ENCODE measurements at regions of chr6 and their contacts with region 1.

Region 1: DNA sequence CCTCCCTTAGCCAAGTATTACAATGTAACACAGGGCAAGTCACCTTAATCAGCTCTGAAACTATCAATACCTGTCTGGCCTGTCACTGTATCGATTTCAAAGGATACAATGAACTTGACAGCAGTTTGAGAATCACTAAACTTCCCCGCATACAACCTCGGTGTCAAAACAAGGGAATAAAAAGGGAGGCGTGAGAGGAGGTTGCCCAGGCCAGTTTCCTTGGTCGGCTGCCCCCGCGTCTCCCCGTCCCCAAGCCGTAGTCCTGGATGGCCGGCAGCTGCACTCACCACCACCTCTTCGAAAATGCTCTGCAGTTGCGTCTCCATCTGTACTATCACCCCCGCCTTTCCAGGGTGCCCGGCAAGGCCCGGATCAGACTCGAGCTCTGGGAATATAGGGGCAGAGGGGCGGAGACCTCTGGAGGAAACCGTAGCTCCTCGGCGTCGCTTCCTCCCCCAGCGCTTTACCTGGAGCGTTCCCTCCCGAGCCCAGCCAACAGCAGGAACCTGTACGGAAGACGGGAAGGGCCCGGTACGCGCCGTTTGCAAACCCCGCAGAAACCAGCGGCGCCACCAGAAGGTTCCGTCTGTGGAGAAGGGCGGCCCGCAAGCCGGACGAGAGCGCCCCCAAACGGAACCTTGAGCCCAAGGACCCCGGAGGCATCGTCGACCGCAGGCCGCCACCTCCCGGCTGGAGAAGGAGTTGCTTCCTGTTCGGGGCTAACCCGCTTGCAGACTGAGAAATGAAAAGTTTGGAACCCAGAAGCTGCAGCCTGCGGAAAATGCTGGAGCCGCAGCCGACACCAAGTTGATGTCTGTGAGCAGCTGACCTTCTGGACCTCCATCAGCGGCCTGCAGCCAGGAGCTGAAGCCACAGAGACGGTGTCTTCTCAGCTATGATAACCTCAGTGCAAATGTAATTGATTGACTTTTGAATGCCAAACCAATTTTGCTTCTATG is at the start of gene MED23:
- DNase-seq: peak; percentile 92
- H3K4me3 Mint-ChIP-seq: peak within 1 kb of the TSS; percentile 97
- H3K27ac Mint-ChIP-seq: peak within 1 kb of the TSS; percentile 90
- H3K4me1 Mint-ChIP-seq: peaks cover 21% of the 10 kb centered on the region
- H3K27me3 Mint-ChIP-seq: no peaks in the 10 kb centered on the region
- total RNA-seq, gene MED23: 40.4 and 43.6 TPM in 2 replicates

Region 2: DNA sequence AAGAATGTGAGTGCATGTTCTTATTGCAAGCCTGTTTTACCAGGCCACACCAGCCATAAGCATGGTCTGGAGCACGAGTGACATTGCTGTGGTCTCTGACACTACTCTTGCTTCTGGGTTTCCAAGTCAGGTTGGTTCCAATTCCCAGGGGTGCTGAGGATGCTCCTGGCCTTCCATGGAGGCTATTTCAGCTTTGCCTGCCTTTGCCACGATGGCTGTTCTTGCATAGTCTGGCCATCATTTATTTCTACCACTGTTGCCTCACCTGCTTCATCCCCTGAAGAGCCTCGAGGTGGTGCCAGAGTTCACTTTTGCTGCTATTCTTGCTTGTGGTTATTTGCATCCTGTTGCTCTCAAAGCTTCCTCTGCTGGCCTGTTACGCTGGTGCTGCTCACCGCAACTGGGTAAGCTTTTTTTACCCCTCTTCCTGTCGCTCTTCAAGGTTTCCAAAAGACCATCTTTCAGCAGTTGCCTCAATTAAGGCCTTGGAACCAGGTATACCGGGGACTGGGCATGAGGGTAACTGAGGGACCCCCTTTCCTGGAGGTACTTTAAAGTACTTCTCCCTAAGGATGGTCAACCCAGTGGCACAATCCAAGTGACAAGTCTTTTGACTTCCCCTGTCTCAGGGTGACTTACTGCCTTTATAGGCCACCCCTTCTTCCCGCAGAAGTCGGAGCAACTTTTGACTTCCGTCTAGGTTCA is 428.3 kb before region 1 on chr6:
- intact Hi-C with region 1: loop called (anchors 2 kb)
- DNase-seq: peak; percentile 76
- H3K4me3 Mint-ChIP-seq: peak overlapping the region; percentile 65
- H3K27ac Mint-ChIP-seq: peak overlapping the region; percentile 93
- H3K4me1 Mint-ChIP-seq: peaks cover 40% of the 10 kb centered on the region
- H3K27me3 Mint-ChIP-seq: no peaks in the 10 kb centered on the region

Region 3: GRCh38 chr6:131613296-131613925 is 14.6 kb before region 1 on chr6:
- intact Hi-C with region 1: loop called (anchors 1 kb)
- DNase-seq: no peak
- H3K4me3 Mint-ChIP-seq: no peak overlapping the region
- H3K27ac Mint-ChIP-seq: no peak overlapping the region
- H3K4me1 Mint-ChIP-seq: peaks cover 14% of the 10 kb centered on the region
- H3K27me3 Mint-ChIP-seq: no peaks in the 10 kb centered on the region

Region 4: DNA sequence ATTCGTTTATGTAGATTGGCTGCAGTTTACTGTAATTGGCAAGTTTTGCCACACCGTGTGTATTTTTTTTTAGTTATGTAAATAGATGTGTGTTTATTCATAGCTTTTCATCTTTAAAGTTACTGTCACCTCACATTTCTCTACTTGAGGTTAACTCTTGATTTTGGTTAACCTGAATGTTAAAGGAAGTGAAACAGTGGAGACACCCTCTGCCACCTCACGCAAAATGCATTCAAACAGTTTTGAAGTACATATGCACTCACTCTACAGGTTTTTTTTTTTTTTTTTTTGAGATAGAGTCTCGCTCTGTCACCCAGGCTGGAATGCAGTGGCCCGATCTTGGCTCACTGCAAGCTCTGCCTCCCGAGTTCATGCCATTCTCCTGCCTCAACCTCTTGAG is 55.5 kb after region 1 on chr6:
- intact Hi-C with region 1: loop called (anchors 1 kb)
- DNase-seq: peak; percentile 22
- H3K4me3 Mint-ChIP-seq: no peak overlapping the region
- H3K27ac Mint-ChIP-seq: peak overlapping the region; percentile 65
- H3K4me1 Mint-ChIP-seq: peaks cover 50% of the 10 kb centered on the region
- H3K27me3 Mint-ChIP-seq: no peaks in the 10 kb centered on the region

Region 5: DNA sequence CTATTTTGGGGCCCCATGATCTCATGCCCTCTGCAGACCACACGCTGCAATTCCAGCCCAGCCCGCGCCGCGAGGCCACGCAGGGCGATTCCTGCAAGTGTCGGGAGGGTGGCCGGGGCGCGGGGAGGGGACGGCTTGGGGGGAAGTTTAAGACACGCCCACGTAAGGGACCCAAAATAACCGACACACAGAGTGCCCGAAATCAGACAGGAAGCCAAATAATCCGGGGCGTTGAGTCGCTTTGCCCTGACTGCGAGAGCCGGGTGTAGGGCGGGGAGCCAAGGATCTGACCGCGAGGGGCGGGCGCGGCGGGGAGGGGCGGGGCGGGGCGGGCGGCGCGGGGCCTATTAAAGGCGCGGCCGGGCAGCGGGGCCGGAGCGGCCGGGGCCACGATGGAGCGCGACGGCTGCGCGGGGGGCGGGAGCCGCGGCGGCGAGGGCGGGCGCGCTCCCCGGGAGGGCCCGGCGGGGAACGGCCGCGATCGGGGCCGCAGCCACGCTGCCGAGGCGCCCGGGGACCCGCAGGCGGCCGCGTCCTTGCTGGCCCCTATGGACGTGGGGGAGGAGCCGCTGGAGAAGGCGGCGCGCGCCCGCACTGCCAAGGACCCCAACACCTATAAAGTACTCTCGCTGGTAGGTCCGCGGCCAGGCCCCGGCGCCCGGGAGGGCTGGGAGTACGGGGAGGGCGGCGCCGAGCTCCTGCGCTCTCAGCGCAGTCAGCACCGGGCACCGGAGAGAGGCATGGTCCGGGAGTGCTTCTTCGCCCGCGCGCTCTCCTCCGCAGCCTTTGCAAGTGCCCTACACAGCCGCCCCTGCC is 179.8 kb after region 1 on chr6 and contains the start of gene ENPP1:
- intact Hi-C with region 1: loop called (anchors 5 kb)
- DNase-seq: peak; percentile 52
- H3K4me3 Mint-ChIP-seq: peak within 1 kb of the TSS; percentile 90
- H3K27ac Mint-ChIP-seq: peak within 1 kb of the TSS; percentile 85
- H3K4me1 Mint-ChIP-seq: peaks cover 37% of the 10 kb centered on the region
- H3K27me3 Mint-ChIP-seq: peaks cover 40% of the 10 kb centered on the region
- total RNA-seq, gene ENPP1: 34.8 TPM in 2 replicates

Region 6: GRCh38 chr6:132131758-132132157 is 503.8 kb after region 1 on chr6:
- intact Hi-C with region 1: no loop called
- DNase-seq: no peak
- H3K4me3 Mint-ChIP-seq: no peak overlapping the region
- H3K27ac Mint-ChIP-seq: no peak overlapping the region
- H3K4me1 Mint-ChIP-seq: peaks cover 8% of the 10 kb centered on the region
- H3K27me3 Mint-ChIP-seq: peaks cover 6% of the 10 kb centered on the region

Region 7: DNA sequence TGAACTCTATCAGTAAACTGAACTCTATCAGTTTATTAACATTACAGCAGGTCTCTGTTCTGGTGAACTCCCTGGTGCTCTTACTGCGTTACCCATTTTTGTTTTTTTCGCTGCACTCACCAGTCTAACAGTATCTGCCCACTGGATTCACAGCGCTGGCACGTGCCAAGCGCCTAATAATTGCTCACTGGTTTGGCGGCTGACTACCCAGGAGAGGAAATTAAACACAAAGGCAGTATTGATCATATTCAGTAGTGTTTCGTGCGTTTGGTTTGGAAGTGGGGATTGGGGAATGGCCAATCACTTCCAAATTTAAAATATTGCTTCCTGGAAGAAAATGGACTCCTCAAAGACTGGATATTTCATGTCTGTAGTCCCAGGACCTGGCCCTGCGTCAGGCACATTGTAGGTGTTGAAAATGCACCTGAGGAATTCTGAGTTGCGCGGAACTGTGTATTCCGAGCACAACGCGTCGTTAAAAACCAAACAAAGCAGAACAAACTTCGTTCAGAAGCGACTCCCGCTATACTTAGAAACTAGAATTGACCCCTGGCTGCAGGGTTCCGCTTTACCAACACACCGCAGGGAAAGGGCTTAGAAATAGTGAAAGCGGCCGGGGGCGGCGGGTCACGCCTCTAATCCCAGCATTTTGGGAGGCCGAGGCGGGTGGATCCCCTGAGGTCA is 1185.3 kb after region 1 on chr6:
- intact Hi-C with region 1: loop called (anchors 1 kb)
- DNase-seq: peak; percentile 30
- H3K4me3 Mint-ChIP-seq: peak overlapping the region; percentile 99
- H3K27ac Mint-ChIP-seq: peak overlapping the region; percentile 95
- H3K4me1 Mint-ChIP-seq: peaks cover 29% of the 10 kb centered on the region
- H3K27me3 Mint-ChIP-seq: peaks cover 24% of the 10 kb centered on the region

Measured in activated T-helper 2 cell treated with anti-CD3 and anti-CD28 coated beads, Interferon-gamma antibody, Interleukin-2, Interleukin-4, amounts not matched to agents 10 μg/mL and 5 μg/mL and 100 μg/mL, durations not matched to agents 14 hours and 24 hours and 36 hours (primary cell).